Heart right ventricle (tissue), 16 donors: ENCODE measurements at regions of chr20 and their contacts with region 1.

Region 1: DNA sequence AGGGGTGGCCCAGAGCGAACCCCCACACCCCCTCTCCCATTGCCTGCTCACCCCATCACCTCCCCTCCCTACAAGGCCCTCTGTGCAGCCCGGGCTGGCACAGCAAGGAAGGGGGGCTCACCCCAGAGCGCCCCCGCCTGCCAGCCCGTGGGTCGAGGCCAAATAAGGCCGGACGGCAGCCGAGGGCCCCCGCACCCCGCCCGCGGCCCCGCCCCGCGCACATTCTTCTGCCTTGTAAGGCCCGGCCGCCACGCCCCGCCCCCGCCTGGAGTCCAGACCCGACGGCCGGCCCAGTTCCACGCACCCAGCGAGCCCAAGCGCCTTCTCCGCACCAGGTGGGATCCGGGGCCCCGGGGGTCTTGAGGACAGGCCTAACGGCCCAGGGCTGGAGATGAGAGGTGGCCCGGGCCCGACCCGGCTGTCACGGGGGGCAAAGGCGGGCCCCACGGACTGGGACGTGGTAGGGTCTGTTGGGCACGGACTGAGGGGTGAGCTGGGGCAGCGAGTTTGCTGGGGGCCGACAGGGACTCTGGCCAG is at the start of gene MYL9:
- DNase-seq: peak; percentile 94
- ATAC-seq: peak; percentile 84 to 91 (median 86)
- H3K4me3 ChIP-seq: peak within 1 kb of the TSS; percentile 75 to 99 (median 96)
- H3K27ac ChIP-seq: peak within 1 kb of the TSS; percentile 91 to 100 (median 98)
- H3K4me1 ChIP-seq: peaks cover 8 to 74% (median 55%) of the 10 kb centered on the region in 9 donors
- H3K27me3 ChIP-seq: no peaks in the 10 kb centered on the region
- CTCF ChIP-seq: peak in 1 of 9 donors; percentile 13
- total RNA-seq, gene MYL9: 1,611 to 2,234 (median 1,868) TPM

Region 2: GRCh38 chr20:36472637-36473081 is 68.6 kb before region 1 on chr20:
- intact Hi-C with region 1: loop called in 2 of 10 experiments (anchors 10 kb)
- DNase-seq: peak; percentile 43 to 51
- ATAC-seq: peak; percentile 44 to 83 (median 70)
- H3K4me3 ChIP-seq: peak overlapping the region in 4 of 10 donors; percentile 4 to 21 (median 15)
- H3K27ac ChIP-seq: peak overlapping the region; percentile 30 to 81 (median 66)
- H3K4me1 ChIP-seq: peaks cover 38 to 90% (median 79%) of the 10 kb centered on the region in 9 donors
- H3K27me3 ChIP-seq: no peaks in the 10 kb centered on the region
- CTCF ChIP-seq: no peak

Region 3: DNA sequence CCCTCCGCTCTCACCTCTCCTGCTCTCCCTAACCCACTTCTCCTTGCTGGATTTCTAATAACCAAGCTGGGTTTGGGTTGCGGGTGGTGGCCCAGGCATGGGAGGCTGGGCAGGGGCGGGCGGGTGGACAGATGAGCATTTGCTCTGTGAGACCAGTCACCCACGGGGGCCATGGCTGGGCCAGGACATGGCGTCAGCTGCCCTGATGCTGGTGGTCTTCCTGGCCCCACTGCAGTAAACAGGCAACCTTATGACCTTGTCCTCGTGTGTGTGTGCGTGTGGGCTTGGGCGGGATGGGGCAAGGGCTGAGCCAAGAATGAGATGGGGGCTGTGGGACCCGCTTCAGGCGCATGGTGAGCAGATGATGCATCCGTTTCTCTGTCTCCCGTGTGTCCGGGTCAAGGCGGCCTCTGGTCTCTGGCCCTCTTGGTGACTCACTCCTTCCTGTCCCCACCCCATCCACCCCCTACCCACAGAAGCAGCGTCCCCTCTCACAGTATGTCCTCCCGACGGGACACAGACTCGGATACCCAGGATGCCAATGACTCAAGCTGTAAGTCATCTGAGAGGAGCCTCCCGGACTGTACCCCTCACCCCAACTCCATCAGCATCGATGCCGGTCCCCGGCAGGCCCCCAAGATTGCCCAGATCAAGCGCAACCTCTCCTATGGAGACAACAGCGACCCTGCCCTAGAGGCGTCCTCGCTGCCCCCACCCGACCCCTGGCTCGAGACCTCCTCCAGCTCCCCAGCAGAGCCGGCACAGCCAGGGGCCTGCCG is 41.4 kb before region 1 on chr20:
- intact Hi-C with region 1: loop called in 3 of 10 experiments (anchors 2 to 5 kb)
- DNase-seq: no peak
- ATAC-seq: no peak
- H3K4me3 ChIP-seq: no peak overlapping the region
- H3K27ac ChIP-seq: peak overlapping the region in 2 of 10 donors; percentile 30 to 79
- H3K4me1 ChIP-seq: peaks cover 11 to 49% (median 30%) of the 10 kb centered on the region in 9 donors
- H3K27me3 ChIP-seq: no peaks in the 10 kb centered on the region
- CTCF ChIP-seq: no peak